Psoas muscle (tissue), 8 donors: ENCODE measurements at regions of chr2 and their contacts with region 1.

Region 1: DNA sequence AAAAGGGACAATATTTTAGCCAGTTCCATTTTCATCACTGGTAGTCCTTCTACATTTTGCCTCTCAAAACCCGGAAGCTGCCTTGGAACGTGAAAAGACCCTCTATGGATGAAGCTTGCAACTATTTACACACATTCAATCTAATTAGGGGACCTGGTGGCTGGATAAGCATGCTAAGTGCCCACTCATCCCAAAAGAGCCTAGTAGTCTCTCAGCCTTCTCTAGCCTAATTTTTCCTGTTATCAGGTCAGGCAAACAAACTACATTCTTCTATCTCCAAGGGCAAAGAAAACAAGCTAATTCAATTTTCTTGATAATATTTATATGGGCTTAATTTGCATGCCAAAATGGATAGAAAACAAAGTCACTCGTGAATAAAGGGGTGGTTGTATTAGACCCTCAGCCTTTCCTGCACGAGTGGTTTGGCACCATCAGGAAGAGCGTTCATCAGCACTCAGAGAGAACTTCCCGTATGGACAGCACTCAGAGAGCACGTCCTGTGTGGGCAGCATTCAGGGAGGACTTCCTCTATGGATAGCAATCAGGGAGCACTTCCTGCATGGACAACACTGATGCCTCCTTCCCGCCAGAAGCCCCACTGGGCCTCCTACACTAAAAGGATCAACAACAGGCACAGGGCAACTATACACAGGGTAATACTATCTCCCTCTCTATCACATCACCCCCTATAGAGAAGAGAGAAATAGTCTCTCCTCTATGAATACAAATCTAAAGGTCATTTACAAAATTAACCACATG is 122.2 kb downstream of the RBMS1 start:
- DNase-seq: no peak
- ATAC-seq: peak in 1 of 4 donors; percentile 21
- H3K4me3 ChIP-seq: no peak overlapping the region
- H3K27ac ChIP-seq: peak overlapping the region; percentile 49
- H3K4me1 ChIP-seq: peaks cover 99% of the 10 kb centered on the region
- H3K27me3 ChIP-seq: no peaks in the 10 kb centered on the region
- CTCF ChIP-seq: no peak

Region 2: DNA sequence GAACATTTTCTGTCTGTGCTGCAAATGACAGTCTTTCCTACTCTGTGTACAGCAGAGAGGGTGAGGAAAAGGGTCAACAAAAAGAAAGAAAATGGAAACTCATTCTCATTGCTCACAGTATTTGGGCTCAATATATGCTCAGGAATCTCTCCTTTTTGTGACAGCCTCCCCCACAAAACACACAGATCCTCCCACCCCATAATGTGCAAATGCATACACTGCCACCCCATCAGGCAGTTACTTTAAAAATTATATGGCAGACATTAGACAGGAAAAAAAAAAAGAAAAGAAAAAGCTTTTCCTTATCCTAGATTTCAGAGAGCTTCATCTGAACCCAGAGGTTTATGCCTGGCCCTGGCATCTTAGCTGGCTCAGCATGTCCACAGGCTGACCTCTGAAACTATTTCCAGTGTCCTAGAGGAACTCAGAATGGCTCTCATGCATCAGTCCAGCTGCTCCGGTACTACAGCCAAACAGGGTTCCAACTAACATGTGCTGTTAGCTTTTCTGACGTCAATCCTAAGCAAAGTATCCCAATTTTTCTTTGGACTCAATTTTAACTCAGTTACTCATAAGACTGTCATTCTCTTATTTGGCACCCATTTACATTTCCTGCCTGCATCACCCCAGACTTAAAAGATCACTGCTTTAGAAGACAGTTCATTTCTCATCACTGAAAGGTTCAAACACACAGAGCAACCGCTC is 16.3 kb after region 1 on chr2:
- intact Hi-C with region 1: loop called in 1 of 2 experiments (anchors 2 kb)
- DNase-seq: peak; percentile 74 to 84
- ATAC-seq: peak; percentile 91 to 95 (median 93)
- H3K4me3 ChIP-seq: no peak overlapping the region
- H3K27ac ChIP-seq: peak overlapping the region; percentile 79
- H3K4me1 ChIP-seq: peaks cover 61% of the 10 kb centered on the region
- H3K27me3 ChIP-seq: no peaks in the 10 kb centered on the region
- CTCF ChIP-seq: no peak

Region 3: DNA sequence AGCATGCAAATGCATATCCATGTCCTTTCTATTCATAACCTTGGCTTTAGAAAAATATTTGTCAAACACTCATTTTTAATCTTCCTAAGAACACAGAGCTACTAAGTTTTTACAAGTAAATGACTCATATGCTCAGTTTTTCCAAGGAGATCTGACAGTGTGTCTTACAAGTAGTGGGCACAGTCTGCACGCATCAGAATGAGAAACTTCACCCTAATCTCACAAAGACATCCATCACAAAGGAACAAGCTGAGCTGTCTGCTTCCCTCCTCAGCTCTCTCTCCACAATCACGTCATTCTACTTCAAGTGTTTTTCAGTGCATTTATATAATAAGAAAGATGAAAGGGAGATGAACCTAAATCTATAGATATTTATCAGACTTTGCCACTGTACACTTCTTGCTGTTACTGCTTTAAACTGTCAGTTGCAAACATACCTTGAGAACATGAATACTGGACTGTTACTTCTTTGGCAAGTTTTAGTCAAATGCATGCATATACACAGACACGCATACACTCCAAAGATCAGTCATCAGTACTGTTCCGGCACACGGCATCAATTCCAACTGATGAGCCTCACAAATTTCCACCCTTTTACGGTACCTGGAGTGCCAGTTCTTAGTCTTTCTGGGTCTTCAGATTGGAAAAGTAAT is 46.4 kb after region 1 on chr2:
- intact Hi-C with region 1: no loop called
- DNase-seq: no peak
- ATAC-seq: no peak
- H3K4me3 ChIP-seq: no peak overlapping the region
- H3K27ac ChIP-seq: no peak overlapping the region
- H3K4me1 ChIP-seq: peaks cover 29% of the 10 kb centered on the region
- H3K27me3 ChIP-seq: no peaks in the 10 kb centered on the region
- CTCF ChIP-seq: no peak

Region 4: DNA sequence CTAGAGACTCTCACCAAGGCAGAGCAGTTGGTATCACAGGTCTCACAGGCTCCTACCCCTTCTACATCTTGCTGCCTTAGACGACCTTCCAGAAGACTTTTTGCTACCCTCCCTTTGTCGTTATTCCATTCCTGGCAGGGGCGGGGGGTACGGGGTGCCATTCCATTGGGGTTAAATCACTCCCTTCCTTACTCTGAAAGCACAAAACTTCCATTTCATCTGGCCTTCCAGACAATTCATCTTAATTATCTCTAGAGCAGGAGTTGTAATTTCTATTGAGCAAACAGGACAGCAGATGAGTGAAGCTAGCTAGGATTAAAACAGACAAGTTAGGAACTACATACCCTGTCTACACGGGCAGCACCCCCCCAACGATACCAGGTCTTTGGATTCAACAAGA is 512.6 kb after region 1 on chr2:
- intact Hi-C with region 1: no loop called
- DNase-seq: no peak
- ATAC-seq: no peak
- H3K4me3 ChIP-seq: no peak overlapping the region
- H3K27ac ChIP-seq: no peak overlapping the region
- H3K4me1 ChIP-seq: no peaks in the 10 kb centered on the region
- H3K27me3 ChIP-seq: no peaks in the 10 kb centered on the region
- CTCF ChIP-seq: no peak